A673 (cell line): ENCODE measurements at regions of chr2 and their contacts with region 1.

Region 1: GRCh38 chr2:72515696-72516095 is 310.1 kb downstream of the EXOC6B start:
- DNase-seq: peak; percentile 97
- H3K4me3 ChIP-seq: peak overlapping the region; percentile 50
- H3K27ac ChIP-seq: peak overlapping the region; percentile 99
- H3K4me1 ChIP-seq: peaks cover 40% of the 10 kb centered on the region
- H3K27me3 ChIP-seq: no peaks in the 10 kb centered on the region
- CTCF ChIP-seq: no peak

Region 2: GRCh38 chr2:72198532-72199241 is 317.0 kb before region 1 on chr2:
- CTCF ChIA-PET with region 1: no interaction called
- POLR2A ChIA-PET with region 1: no interaction called
- intact Hi-C with region 1: loop called (anchors 10 kb)
- DNase-seq: peak; percentile 23
- H3K4me3 ChIP-seq: no peak overlapping the region
- H3K27ac ChIP-seq: peak overlapping the region; percentile 7
- H3K4me1 ChIP-seq: peaks cover 25% of the 10 kb centered on the region
- H3K27me3 ChIP-seq: no peaks in the 10 kb centered on the region
- CTCF ChIP-seq: 0 out of 2 replicates have a peak, but pooled peaks have one; percentile 17

Region 3: DNA sequence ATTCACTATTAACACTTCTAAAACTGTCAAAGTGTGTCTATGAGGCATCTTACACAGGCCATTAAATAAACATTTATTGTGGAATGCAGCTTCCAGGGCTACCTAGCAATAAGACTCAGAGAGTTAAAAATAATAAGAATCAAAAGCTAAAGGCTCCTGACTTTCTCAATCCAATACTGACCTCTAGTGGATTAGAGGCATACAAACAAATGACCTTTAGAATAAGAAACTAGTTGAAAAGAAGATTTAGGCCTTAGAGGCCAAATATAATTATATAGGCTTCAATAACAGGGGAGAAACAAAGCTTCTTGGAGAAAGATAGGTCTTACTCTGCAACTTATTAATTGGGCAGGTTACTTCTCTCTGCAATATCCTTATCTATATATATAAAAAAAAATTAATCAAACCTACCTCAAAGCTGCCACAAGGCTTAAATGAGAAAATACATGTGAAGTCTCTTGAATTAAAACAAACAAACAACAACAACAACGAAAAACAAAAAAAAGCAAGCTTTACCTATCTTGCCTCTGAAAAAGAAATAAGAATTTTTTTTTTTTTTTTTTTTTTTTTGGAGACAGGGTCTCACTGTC is 64.0 kb after region 1 on chr2:
- CTCF ChIA-PET with region 1: no interaction called
- POLR2A ChIA-PET with region 1: interaction called, 3 read pairs
- intact Hi-C with region 1: loop called (anchors 1 kb)
- DNase-seq: peak; percentile 81
- H3K4me3 ChIP-seq: no peak overlapping the region
- H3K27ac ChIP-seq: peak overlapping the region; percentile 10
- H3K4me1 ChIP-seq: peaks cover 48% of the 10 kb centered on the region
- H3K27me3 ChIP-seq: no peaks in the 10 kb centered on the region
- CTCF ChIP-seq: peak; percentile 73